Endothelial cell of umbilical vein (primary cell): ENCODE measurements at regions of chr13 and their contacts with region 1.

Region 1: GRCh38 chr13:99269627-99270241 is 11.6 kb upstream of the GPR18 start:
- DNase-seq: peak; percentile 71
- H3K4me3 ChIP-seq: no peak overlapping the region
- H3K27ac ChIP-seq: no peak overlapping the region
- H3K4me1 ChIP-seq: no peaks in the 10 kb centered on the region
- H3K27me3 ChIP-seq: no peaks in the 10 kb centered on the region
- CTCF ChIP-seq: peak; percentile 43 to 52
- POLR2A ChIP-seq: no peak

Region 2: GRCh38 chr13:99004978-99005377 is 264.8 kb before region 1 on chr13:
- CTCF ChIA-PET with region 1: no interaction called
- POLR2A ChIA-PET with region 1: no interaction called
- dilution Hi-C with region 1: no loop called
- intact Hi-C with region 1: no loop called
- DNase-seq: peak; percentile 75
- H3K4me3 ChIP-seq: no peak overlapping the region
- H3K27ac ChIP-seq: peak overlapping the region; percentile 30
- H3K4me1 ChIP-seq: peaks cover 39% of the 10 kb centered on the region
- H3K27me3 ChIP-seq: no peaks in the 10 kb centered on the region
- CTCF ChIP-seq: no peak
- POLR2A ChIP-seq: no peak

Region 3: DNA sequence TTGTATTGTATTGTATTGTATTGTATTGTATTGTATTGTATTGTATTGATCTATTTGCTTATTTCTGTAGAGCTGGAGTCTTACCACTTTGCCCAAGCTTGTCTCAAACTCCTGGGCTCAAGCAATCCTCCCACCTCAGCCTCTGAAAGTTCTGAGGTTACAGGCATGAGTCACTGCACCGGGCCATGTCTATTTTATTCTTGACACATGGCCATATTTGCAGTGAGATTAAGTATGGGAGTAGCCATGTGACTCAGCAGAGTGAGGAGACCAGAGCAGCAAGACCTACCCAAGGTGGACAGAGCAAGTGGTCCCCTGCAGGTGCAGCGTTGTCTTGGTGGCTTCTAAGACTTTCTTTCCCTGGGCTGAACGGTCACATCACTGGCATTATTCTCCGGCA is 118.2 kb before region 1 on chr13:
- CTCF ChIA-PET with region 1: no interaction called
- POLR2A ChIA-PET with region 1: no interaction called
- dilution Hi-C with region 1: loop called (anchors 25 kb)
- intact Hi-C with region 1: no loop called
- DNase-seq: no peak
- H3K4me3 ChIP-seq: no peak overlapping the region
- H3K27ac ChIP-seq: no peak overlapping the region
- H3K4me1 ChIP-seq: no peaks in the 10 kb centered on the region
- H3K27me3 ChIP-seq: peaks cover 2% of the 10 kb centered on the region in 2 experiments
- CTCF ChIP-seq: no peak
- POLR2A ChIP-seq: no peak

Region 4: GRCh38 chr13:99258210-99258860 is 11.4 kb before region 1 on chr13 and contains the start of gene GPR18:
- CTCF ChIA-PET with region 1: interaction called, 14 read pairs
- POLR2A ChIA-PET with region 1: no interaction called
- dilution Hi-C with region 1: no loop called
- intact Hi-C with region 1: no loop called
- DNase-seq: peak; percentile 15
- H3K4me3 ChIP-seq: no peak within 1 kb of the TSS
- H3K27ac ChIP-seq: no peak within 1 kb of the TSS
- H3K4me1 ChIP-seq: peaks cover 9% of the 10 kb centered on the region
- H3K27me3 ChIP-seq: no peaks in the 10 kb centered on the region
- CTCF ChIP-seq: no peak
- POLR2A ChIP-seq: no peak
- total RNA-seq, gene GPR18: not detected in 2 replicates

Region 5: GRCh38 chr13:99320693-99321481 is 51.2 kb after region 1 on chr13:
- CTCF ChIA-PET with region 1: interaction called, 9 read pairs
- POLR2A ChIA-PET with region 1: no interaction called
- dilution Hi-C with region 1: no loop called
- intact Hi-C with region 1: loop called (anchors 2 kb)
- DNase-seq: peak; percentile 93
- H3K4me3 ChIP-seq: no peak overlapping the region
- H3K27ac ChIP-seq: peak overlapping the region; percentile 77
- H3K4me1 ChIP-seq: peaks cover 16% of the 10 kb centered on the region
- H3K27me3 ChIP-seq: no peaks in the 10 kb centered on the region
- CTCF ChIP-seq: no peak
- POLR2A ChIP-seq: no peak

Region 6: DNA sequence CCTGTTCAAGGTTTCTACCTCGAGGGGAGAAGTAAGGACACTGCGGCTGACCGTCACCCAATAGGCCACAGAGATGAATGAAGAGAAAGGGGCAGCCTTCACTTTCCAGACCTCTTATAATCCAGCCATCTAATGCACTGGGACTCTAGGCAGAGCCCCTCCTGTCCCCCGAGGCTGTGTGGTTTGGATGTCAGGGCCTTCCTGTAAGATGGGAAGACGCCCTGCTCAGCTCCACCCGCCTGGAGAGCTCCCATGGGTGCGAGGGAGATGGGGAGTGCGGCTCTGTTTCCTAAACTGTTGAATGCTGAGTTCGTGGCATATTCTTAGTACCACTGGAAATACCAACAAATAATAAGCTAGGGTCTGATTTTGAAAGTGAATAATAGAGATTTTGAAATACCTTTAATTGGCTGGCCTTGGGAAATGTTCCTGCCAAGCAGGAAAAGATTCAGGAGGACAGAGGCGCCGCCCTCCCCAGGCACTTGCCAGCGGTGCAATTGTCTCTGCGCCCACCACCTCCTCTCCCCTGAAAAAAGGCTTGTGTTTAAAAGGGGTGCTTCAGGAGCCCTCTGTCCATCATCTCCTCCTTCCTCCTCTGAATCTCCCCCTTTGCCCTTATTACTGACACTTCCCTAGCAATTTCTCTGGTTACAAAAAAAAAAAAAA is 122.9 kb after region 1 on chr13:
- CTCF ChIA-PET with region 1: interaction called, 23 read pairs
- POLR2A ChIA-PET with region 1: no interaction called
- dilution Hi-C with region 1: no loop called
- intact Hi-C with region 1: loop called (anchors 1 kb)
- DNase-seq: no peak
- H3K4me3 ChIP-seq: no peak overlapping the region
- H3K27ac ChIP-seq: no peak overlapping the region
- H3K4me1 ChIP-seq: no peaks in the 10 kb centered on the region
- H3K27me3 ChIP-seq: no peaks in the 10 kb centered on the region
- CTCF ChIP-seq: no peak
- POLR2A ChIP-seq: no peak

Region 7: DNA sequence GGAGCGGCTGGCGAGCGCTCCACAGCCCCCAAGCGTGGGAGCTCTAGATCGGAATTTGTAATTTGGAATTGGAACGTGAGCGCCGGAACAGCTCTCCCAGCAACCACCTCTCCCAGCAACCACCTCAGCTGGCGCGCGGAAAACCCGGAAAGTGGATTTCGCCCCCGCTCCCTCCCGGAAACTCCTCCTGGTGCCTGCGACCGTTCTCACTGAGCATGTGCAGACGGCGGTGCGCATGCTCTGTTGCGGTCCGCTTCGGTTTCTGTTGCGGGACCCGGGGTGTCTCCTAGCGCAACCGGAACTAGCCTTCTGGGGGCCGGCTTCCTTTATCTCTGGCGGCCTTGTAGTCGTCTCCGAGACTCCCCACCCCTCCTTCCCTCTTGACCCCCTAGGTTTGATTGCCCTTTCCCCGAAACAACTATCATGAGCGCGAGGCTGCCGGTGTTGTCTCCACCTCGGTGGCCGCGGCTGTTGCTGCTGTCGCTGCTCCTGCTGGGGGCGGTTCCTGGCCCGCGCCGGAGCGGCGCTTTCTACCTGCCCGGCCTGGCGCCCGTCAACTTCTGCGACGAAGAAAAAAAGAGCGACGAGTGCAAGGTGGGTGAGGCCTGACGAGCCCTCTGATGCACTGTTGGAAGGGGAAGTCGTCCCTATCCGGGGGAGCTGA is 231.6 kb after region 1 on chr13 and contains the start of gene TM9SF2:
- CTCF ChIA-PET with region 1: interaction called, 17 read pairs
- POLR2A ChIA-PET with region 1: no interaction called
- dilution Hi-C with region 1: no loop called
- intact Hi-C with region 1: no loop called
- DNase-seq: peak; percentile 95
- H3K4me3 ChIP-seq: peak within 1 kb of the TSS; percentile 91 to 96 (median 91)
- H3K27ac ChIP-seq: peak within 1 kb of the TSS; percentile 68
- H3K4me1 ChIP-seq: peaks cover 34% of the 10 kb centered on the region
- H3K27me3 ChIP-seq: no peaks in the 10 kb centered on the region
- CTCF ChIP-seq: no peak
- POLR2A ChIP-seq: peak; percentile 74
- total RNA-seq, gene TM9SF2: 85.9 and 90.0 TPM in 2 replicates